BJ (cell line): ENCODE measurements at regions of chr3 and their contacts with region 1.

Region 1: GRCh38 chr3:47824541-47825473 is 21.9 kb downstream of the DHX30 start:
- DNase-seq: peak; percentile 41
- H3K4me3 ChIP-seq: peak overlapping the region; percentile 94
- H3K27me3 ChIP-seq: no peaks in the 10 kb centered on the region
- CTCF ChIP-seq: peak; percentile 53

Region 2: DNA sequence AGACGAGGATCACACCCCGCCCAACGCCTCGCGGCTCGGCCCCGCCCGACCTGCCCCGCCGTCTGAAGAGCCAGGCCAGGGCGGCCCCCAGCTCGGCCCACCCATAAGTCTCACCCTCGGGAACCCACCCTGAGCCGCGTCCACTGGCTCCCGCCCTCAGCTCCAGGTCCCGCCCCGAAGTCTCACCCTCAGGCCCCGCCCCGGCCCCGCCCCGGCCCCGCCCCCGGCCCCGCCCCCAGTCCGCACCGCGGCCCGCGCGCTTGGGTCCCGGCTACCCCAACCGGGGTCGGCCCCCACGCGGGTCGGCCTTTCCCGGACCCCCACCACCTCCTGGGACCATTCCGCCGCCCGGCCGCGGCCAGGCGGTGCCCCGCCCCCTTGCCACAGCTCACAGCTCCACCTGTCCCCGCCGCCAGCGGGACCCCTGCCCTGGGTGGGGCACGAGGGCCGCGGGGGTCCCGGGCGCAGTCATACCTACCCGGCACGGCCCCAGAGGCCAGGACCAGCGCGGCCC is 246.6 kb before region 1 on chr3:
- CTCF ChIA-PET with region 1: no interaction called
- POLR2A ChIA-PET with region 1: no interaction called
- DNase-seq: no peak
- H3K4me3 ChIP-seq: peak overlapping the region; percentile 53
- H3K27me3 ChIP-seq: peaks cover 29% of the 10 kb centered on the region
- CTCF ChIP-seq: no peak

Region 3: DNA sequence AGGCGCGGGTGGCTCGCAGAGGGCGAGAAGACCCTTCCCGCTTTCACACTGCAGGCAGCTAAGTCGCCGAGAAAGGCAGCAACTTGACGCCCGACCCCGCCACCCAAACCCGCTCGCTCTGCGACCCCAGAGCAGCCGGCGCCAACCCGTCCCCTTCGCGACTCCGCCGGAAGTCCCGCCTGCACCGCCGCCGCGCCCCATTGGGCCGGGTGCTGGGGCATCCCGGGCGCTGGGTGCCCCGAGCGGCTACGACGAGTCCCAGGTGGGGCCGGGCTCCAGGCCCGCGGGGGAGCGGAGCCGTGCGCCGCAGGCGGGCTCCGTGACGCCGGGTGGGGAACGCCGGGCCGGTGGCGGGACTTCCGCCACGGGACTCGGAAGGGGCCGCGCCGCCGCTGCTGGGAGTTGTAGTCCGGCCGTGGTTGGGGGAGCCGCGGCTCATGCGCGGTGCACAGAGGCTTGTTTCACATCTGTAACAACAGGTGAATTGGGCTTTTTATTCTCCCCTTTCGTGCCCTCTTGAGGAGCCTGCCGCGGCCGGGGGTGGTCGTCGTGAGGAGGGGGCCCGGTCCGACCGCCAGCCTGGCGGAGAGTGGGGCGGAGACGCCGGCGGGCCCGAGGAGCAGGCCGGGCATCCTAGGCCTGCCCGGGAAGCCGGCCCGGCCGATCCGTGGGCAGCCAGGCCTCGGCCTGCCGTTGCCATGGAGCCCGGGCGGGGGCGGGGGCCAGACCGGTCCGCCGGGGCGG is 21.9 kb before region 1 on chr3 and contains the start of gene DHX30:
- CTCF ChIA-PET with region 1: interaction called, 10 read pairs
- POLR2A ChIA-PET with region 1: no interaction called
- DNase-seq: no peak
- H3K4me3 ChIP-seq: peak within 1 kb of the TSS; percentile 63
- H3K27me3 ChIP-seq: no peaks in the 10 kb centered on the region
- CTCF ChIP-seq: no peak
- polyA plus RNA-seq, gene DHX30: 31.8 and 53.4 TPM in 2 replicates

Region 4: DNA sequence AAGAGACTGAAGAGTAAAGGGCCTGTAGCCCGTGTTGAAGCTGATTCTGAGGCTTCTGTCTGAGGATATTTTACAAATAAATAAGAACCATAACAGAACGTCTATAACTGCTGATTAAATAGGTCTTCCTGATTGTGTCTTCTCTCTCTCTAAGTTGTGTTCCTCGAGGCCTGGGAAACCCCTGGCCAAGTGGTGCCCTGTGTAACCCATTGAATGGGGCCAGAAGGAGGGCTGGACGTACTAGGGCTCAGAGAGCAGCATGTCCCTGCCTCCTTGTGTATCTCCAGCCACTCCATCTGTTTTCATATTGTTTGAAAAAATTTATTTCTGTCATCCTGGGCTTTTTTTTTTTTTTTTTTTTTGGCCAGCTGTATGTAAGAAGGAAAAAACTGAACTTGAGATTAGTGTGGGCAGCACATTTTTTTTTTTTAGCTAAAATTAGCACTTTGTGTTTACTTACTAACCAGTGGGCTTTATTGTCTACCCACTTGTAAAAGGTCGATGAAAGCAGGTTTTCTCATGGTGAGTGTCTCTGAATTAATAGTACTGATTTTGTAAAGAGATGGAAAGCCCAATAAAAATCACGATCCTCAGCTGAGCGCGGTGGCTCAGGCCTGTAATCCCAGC is 11.1 kb before region 1 on chr3:
- CTCF ChIA-PET with region 1: interaction called, 38 read pairs
- POLR2A ChIA-PET with region 1: no interaction called
- DNase-seq: no peak
- H3K4me3 ChIP-seq: no peak overlapping the region
- H3K27me3 ChIP-seq: no peaks in the 10 kb centered on the region
- CTCF ChIP-seq: no peak

Region 5: DNA sequence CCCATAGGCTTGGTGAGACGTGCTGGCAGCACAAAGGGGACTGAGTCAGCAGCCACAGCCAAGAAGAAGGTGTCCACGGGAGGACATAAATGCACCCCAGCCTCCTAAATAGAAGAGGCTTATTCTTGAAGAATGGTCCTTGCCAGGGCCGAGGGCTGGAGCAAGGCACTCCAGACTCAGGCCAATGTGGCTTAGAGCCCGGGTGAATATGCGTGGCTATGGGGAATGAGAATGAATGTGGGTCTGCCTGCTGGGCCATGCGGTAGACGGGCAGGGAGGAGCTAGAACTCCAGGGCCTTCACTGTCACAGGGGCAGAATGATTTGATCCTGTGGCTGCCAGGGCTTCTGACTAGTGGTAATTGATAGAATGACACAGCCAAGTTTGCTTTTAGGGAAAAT is 12.2 kb after region 1 on chr3:
- CTCF ChIA-PET with region 1: interaction called, 44 read pairs
- POLR2A ChIA-PET with region 1: interaction called, 8 read pairs
- DNase-seq: no peak
- H3K4me3 ChIP-seq: no peak overlapping the region
- H3K27me3 ChIP-seq: no peaks in the 10 kb centered on the region
- CTCF ChIP-seq: no peak

Region 6: DNA sequence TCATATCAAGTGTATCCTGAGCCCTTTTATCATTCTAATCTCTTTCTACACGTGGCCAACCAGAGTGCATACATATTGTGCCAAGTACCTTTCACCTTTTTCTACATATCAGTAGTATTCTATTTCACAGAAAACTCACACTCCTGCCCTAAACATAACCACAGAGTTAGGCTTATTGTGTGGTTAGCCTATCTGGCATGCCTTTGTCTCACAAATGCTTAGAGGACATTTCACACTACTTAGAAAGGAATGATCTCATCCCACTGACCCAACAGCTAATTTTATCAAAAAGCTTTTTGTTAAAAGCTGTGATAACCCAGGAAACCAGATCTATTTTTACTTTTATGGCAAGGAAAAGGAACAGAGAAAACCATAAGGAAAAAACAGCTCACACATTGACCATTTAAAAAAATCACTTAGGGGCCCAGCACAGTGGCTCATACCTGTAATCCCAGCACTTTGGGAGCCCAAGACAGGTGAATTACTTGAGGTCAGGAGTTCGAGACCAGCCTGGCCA is 209.3 kb after region 1 on chr3:
- CTCF ChIA-PET with region 1: no interaction called
- POLR2A ChIA-PET with region 1: no interaction called
- DNase-seq: no peak
- H3K4me3 ChIP-seq: no peak overlapping the region
- H3K27me3 ChIP-seq: no peaks in the 10 kb centered on the region
- CTCF ChIP-seq: no peak